K562 (cell line): ENCODE measurements at regions of chr19 and their contacts with region 1.

Region 1: GRCh38 chr19:35693830-35694599 is 10.3 kb upstream of the ZBTB32 start:
- DNase-seq: peak; percentile 87 to 92 (median 89)
- ATAC-seq: peak; percentile 100
- H3K4me3 ChIP-seq: no peak overlapping the region
- H3K27ac ChIP-seq: no peak overlapping the region
- H3K4me1 ChIP-seq: no peaks in the 10 kb centered on the region; a peak in 1 of 5 replicates
- H3K27me3 ChIP-seq: no peaks in the 10 kb centered on the region
- CTCF ChIP-seq: peak; percentile 98 to 99 (median 99)
- EP300 ChIP-seq: no peak
- POLR2A ChIP-seq: no peak
- RAD21 ChIP-seq: peak; percentile 97 to 99

Region 2: DNA sequence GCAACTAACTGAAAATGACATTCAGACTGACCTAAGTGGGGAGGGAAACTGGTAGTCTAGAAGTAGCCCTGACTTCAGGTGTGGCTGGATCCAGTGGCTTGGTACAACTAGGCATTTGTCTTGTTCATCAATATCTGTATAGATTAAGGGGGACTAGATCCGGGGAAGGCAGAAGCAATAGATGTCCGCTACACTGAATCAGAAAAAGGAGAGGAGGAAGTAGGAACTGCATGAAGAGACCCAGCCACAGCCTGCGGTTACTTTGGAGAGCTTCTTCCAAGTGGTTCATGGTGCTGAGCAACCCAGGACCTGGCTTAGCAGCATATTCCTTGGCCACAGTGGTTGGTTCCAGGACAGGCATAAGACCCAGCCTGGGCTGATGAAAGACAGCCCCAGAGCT is 128.6 kb after region 1 on chr19:
- CTCF ChIA-PET with region 1: interaction called, 22 read pairs
- POLR2A ChIA-PET with region 1: no interaction called
- in situ Hi-C with region 1: no loop called
- intact Hi-C with region 1: loop called (anchors 1 kb)
- DNase-seq: peak; percentile 32 to 50 (median 44)
- ATAC-seq: peak; percentile 86
- H3K4me3 ChIP-seq: peak overlapping the region; percentile 24
- H3K27ac ChIP-seq: no peak overlapping the region
- H3K4me1 ChIP-seq: peaks cover 0 to 5% of the 10 kb centered on the region in 2 experiments; a peak in 2 of 5 replicates
- H3K27me3 ChIP-seq: peaks cover 2 to 5% of the 10 kb centered on the region in 2 experiments; a peak in 2 of 5 replicates
- CTCF ChIP-seq: no peak
- EP300 ChIP-seq: no peak
- POLR2A ChIP-seq: no peak
- RAD21 ChIP-seq: no peak

Region 3: GRCh38 chr19:35925501-35925900 is 231.5 kb after region 1 on chr19:
- CTCF ChIA-PET with region 1: no interaction called
- POLR2A ChIA-PET with region 1: no interaction called
- in situ Hi-C with region 1: no loop called
- intact Hi-C with region 1: no loop called
- DNase-seq: no peak
- ATAC-seq: no peak
- H3K4me3 ChIP-seq: no peak overlapping the region
- H3K27ac ChIP-seq: no peak overlapping the region
- H3K4me1 ChIP-seq: no peaks in the 10 kb centered on the region; a peak in 1 of 5 replicates
- H3K27me3 ChIP-seq: peaks cover 0 to 19% of the 10 kb centered on the region in 2 experiments; a peak in 3 of 5 replicates
- CTCF ChIP-seq: no peak
- EP300 ChIP-seq: no peak
- POLR2A ChIP-seq: no peak
- RAD21 ChIP-seq: no peak